ENCODE measurements at regions of chr21 and their contacts with region 1.

Region 1: GRCh38 chr21:26170471-26171257 is at the start of gene APP:
- DNase-seq: peak; percentile 96
- ATAC-seq: peak; percentile 90
- H3K4me3 Mint-ChIP-seq: peak within 1 kb of the TSS; percentile 91
- H3K27ac Mint-ChIP-seq: no peak within 1 kb of the TSS
- H3K4me1 Mint-ChIP-seq: peaks cover 18% of the 10 kb centered on the region
- H3K27me3 Mint-ChIP-seq: peaks cover 8% of the 10 kb centered on the region
- CTCF ChIP-seq: peak; percentile 48
- total RNA-seq, gene APP: 28.2 and 32.1 TPM in 2 replicates

Region 2: GRCh38 chr21:25881525-25882376 is 288.9 kb before region 1 on chr21:
- CTCF ChIA-PET with region 1: interaction called, 11 read pairs
- POLR2A ChIA-PET with region 1: no interaction called
- intact Hi-C with region 1: loop called (anchors 1 kb)
- DNase-seq: peak; percentile 39
- ATAC-seq: peak; percentile 87
- H3K4me3 Mint-ChIP-seq: no peak overlapping the region
- H3K27ac Mint-ChIP-seq: no peak overlapping the region
- H3K4me1 Mint-ChIP-seq: no peaks in the 10 kb centered on the region
- H3K27me3 Mint-ChIP-seq: no peaks in the 10 kb centered on the region
- CTCF ChIP-seq: peak; percentile 33

Region 3: GRCh38 chr21:25895565-25896205 is 275.0 kb before region 1 on chr21:
- CTCF ChIA-PET with region 1: interaction called, 21 read pairs
- POLR2A ChIA-PET with region 1: interaction called, 9 read pairs
- intact Hi-C with region 1: loop called (anchors 1 kb)
- DNase-seq: no peak
- ATAC-seq: peak; percentile 84
- H3K4me3 Mint-ChIP-seq: no peak overlapping the region
- H3K27ac Mint-ChIP-seq: no peak overlapping the region
- H3K4me1 Mint-ChIP-seq: peaks cover 3% of the 10 kb centered on the region
- H3K27me3 Mint-ChIP-seq: no peaks in the 10 kb centered on the region
- CTCF ChIP-seq: no peak

Region 4: DNA sequence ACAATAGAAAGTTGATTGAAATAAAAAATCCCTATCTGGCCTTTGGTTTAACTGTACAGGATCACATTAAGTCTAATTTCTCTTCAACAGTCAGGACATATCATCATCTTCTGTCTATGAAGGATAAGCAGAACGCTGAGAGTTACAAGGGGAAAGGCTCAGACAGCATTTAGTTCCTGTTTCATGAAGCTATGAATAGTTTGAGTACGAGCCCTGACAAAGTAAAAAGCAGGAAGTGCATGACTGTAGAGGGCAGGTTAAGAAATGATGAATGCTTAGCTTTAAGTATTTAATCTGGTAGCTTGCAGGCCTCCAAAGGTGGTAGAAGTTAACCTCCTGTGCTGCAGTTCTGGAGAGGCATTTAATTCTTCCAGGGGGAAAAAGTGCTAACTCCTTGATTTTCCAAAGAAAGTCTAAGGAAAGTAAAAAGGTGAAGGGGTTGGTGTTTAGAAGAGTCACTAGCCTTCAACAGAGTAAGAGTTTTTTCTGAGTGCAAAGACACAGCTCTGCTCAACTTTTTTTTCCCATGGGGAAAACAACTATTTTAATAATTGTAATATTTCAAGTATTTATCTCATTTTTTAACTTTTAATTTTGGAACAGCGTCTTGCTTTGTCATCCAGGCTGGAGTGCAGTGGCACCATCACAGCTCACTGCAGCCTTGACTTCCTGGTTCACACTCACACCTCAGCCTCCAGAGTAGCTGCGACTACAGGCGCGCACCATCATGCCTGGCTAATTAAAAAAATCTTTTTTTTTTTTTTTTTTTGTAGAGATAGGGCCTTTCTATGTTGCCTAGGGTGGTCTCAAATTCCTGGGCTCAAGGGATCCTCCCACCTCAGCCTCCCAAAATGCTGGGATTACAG is 202.9 kb before region 1 on chr21:
- CTCF ChIA-PET with region 1: interaction called, 5 read pairs
- POLR2A ChIA-PET with region 1: interaction called, 7 read pairs
- intact Hi-C with region 1: loop called (anchors 1 kb)
- DNase-seq: no peak
- ATAC-seq: peak; percentile 95
- H3K4me3 Mint-ChIP-seq: peak overlapping the region; percentile 24
- H3K27ac Mint-ChIP-seq: peak overlapping the region; percentile 93
- H3K4me1 Mint-ChIP-seq: peaks cover 32% of the 10 kb centered on the region
- H3K27me3 Mint-ChIP-seq: no peaks in the 10 kb centered on the region
- CTCF ChIP-seq: no peak

Region 5: DNA sequence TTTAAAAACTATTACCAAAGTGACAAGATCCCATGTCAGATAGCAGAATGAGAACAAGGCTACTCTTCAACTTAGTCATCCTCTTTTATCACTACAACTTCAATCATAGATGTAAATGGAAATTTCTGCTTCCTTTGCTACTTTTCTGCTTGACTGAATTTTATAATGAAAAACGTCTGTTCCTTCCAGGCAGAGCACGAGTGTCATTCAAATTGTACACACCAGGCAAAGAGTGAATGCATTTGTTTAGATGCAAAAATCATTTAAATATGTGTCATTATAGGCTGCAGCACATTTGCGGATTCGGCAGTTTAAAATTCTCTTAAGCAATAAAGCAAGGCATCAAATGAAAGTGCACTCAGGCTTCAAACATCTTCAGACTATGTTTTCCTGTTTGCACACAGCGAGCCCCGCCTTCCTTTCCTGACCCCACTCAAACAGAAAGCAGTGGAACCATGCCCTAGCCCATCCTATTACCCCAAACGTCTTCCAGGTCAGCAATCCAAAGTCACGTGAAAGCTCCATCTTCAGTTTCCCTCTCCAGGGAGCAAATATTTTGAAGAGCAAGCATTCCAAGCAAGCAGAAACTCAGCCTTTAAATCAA is 99.7 kb before region 1 on chr21:
- CTCF ChIA-PET with region 1: no interaction called
- POLR2A ChIA-PET with region 1: no interaction called
- intact Hi-C with region 1: loop called (anchors 5 kb)
- DNase-seq: no peak
- ATAC-seq: peak; percentile 82
- H3K4me3 Mint-ChIP-seq: peak overlapping the region; percentile 69
- H3K27ac Mint-ChIP-seq: peak overlapping the region; percentile 77
- H3K4me1 Mint-ChIP-seq: peaks cover 31% of the 10 kb centered on the region
- H3K27me3 Mint-ChIP-seq: no peaks in the 10 kb centered on the region
- CTCF ChIP-seq: no peak

Region 6: GRCh38 chr21:26118938-26119540 is 51.6 kb before region 1 on chr21:
- CTCF ChIA-PET with region 1: no interaction called
- POLR2A ChIA-PET with region 1: no interaction called
- intact Hi-C with region 1: loop called (anchors 1 kb)
- DNase-seq: no peak
- ATAC-seq: peak; percentile 57
- H3K4me3 Mint-ChIP-seq: peak overlapping the region; percentile 36
- H3K27ac Mint-ChIP-seq: no peak overlapping the region
- H3K4me1 Mint-ChIP-seq: peaks cover 26% of the 10 kb centered on the region
- H3K27me3 Mint-ChIP-seq: no peaks in the 10 kb centered on the region
- CTCF ChIP-seq: no peak

Region 7: DNA sequence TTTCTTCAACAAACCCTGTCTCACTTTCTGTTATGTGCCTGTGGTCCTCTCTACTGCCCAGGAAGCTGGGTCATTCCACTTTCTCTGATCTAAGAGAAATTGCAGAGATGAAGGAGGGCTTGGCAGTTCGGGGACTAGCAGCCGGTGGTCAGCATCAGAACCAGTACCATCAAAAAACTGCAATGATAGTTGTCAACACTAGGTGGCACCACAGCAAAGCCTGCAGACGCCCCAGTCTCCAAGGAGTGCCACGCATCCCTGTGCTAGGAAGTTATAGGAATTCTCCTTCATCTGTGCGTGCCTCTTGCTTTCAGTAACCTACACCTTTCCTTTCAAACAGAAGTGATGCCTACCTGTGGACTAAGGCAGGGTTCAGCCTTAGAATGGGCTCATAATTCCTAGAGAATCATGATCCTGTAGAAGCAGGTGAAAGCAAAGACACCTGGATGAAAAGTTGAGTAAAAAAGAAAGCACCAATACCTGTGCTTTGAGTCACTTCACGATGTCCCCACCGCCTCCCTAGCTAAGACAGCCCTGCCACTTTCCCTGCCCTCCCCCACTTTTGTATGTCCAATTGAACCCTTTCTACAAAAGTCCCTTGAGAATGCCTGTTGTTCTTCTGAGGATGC is 545.3 kb after region 1 on chr21:
- CTCF ChIA-PET with region 1: no interaction called
- POLR2A ChIA-PET with region 1: no interaction called
- intact Hi-C with region 1: loop called (anchors 5 kb)
- DNase-seq: no peak
- ATAC-seq: no peak
- H3K4me3 Mint-ChIP-seq: no peak overlapping the region
- H3K27ac Mint-ChIP-seq: no peak overlapping the region
- H3K4me1 Mint-ChIP-seq: no peaks in the 10 kb centered on the region
- H3K27me3 Mint-ChIP-seq: peaks cover 3% of the 10 kb centered on the region
- CTCF ChIP-seq: no peak

Region 8: DNA sequence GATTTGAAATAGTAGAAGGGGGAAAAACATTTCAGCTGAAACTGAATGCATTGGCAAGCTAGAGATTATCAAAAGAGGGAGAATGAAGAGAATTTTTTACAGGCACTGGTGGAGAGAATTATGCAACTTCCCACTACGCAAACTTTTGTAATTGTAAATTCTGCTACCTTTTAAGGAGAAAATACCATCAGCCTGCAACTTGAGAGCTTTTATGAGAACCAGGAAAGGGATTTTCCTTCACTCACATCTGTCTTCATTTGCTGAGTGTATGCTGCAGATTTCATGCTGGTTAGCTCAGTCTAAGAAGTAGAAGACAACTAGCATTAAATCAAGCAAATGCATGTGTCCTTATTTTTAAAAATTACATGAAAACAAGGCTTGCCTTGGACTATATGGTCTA is 630.9 kb after region 1 on chr21:
- CTCF ChIA-PET with region 1: no interaction called
- POLR2A ChIA-PET with region 1: no interaction called
- intact Hi-C with region 1: no loop called
- DNase-seq: no peak
- ATAC-seq: no peak
- H3K4me3 Mint-ChIP-seq: no peak overlapping the region
- H3K27ac Mint-ChIP-seq: no peak overlapping the region
- H3K4me1 Mint-ChIP-seq: no peaks in the 10 kb centered on the region
- H3K27me3 Mint-ChIP-seq: no peaks in the 10 kb centered on the region
- CTCF ChIP-seq: no peak